GM10248 (cell line): ENCODE measurements at regions of chr16 and their contacts with region 1.

Region 1: DNA sequence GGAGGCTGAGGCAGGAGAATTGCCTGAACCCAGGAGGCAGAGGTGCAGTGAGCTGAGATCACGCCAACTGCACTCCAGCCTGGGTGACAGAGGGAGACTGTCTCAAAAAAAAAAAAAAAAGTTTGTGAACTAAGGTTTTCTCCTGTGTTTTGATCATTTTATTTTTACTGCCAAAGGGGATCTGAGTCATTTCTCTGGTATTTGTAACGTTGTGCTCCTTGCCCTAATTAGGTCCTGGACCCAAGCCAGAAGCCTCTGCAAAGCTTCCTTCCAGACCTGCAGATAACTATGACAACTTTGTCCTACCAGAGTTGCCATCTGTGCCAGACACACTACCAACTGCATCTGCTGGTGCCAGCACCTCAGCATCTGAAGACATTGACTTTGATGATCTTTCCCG is 32.1 kb downstream of the IST1 start:
- DNase-seq: no peak
- CTCF ChIP-seq: no peak

Region 2: GRCh38 chr16:71937868-71938510 is 10.6 kb after region 1 on chr16:
- CTCF ChIA-PET with region 1: interaction called, 12 read pairs
- POLR2A ChIA-PET with region 1: no interaction called
- DNase-seq: no peak
- CTCF ChIP-seq: no peak